Activated CD4-positive, alpha-beta T cell treated with anti-CD3 and anti-CD28 coated beads, Interleukin-2, amount 10 ng/mL, durations not matched to agents 24 days and 14 days (primary cell): ENCODE measurements at regions of chr1 and their contacts with region 1.

Region 1: DNA sequence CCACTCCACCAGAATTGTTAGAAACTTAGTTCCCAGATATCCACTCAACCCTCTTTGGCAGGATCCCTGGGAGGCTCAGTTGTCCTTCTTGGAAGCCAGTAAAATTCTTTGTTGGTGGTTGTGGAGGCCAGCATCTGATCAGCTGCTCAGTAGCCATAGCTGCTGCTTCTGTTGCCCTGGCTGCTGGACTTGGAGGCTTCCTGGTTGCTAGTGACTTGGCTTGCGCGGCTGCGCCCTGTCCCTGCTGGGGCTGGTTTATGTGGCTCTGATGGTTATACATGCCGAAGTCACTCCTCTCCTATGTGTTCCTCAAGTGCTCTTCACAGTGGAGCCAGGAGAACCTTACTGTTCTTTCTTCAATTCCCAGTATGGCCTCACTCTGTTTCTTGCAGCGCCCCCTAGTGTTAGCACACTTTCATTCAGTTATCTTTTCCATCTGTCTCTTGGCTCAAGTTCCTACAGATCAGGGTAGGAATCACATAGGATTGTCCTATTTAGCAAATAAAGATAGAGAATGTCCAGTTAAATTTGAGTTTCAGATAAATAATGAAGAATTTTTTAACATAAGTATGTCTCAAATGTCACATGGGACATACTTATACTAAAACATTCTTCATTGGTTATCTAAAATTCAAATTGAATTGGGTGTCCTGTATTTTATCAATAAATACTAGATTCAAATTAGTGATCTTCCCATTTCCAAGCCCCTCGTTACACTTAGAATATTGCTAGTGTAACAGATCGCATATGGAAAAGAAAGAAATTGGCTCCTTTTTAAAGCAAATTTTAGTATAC is 176.4 kb downstream of the TGFB2 start:
- DNase-seq: peak; percentile 78
- H3K4me3 Mint-ChIP-seq: no peak overlapping the region
- H3K27ac Mint-ChIP-seq: no peak overlapping the region
- H3K4me1 Mint-ChIP-seq: no peaks in the 10 kb centered on the region
- H3K27me3 Mint-ChIP-seq: peaks cover 4% of the 10 kb centered on the region

Region 2: DNA sequence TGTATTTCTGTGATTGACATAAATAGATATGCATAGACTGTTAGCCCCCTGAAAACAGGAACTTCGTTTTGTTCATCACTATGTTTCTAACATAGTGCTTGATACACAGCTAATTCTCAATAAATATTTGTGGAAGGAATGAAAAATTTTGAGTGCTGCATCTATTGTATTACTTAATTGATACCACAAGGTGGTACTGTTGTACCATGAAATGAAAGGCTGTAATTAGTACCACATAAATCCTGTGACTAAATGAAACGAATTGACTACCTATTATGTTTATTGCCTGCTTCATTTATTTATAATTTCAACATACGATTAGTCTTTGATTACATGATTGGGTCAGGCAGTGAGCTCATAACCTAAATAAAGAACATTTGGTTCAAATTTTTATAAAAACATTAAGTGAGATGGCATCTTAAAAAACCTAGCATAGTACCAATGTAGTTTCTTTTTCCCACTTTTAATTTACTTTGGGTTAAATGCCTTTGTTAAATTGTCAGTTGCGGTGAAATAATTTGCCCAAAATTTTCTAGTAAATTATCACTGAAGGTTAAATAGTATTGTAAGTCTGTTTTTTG is 191.4 kb before region 1 on chr1:
- intact Hi-C with region 1: loop called (anchors 1 kb)
- DNase-seq: no peak
- H3K4me3 Mint-ChIP-seq: no peak overlapping the region
- H3K27ac Mint-ChIP-seq: no peak overlapping the region
- H3K4me1 Mint-ChIP-seq: no peaks in the 10 kb centered on the region
- H3K27me3 Mint-ChIP-seq: no peaks in the 10 kb centered on the region

Region 3: DNA sequence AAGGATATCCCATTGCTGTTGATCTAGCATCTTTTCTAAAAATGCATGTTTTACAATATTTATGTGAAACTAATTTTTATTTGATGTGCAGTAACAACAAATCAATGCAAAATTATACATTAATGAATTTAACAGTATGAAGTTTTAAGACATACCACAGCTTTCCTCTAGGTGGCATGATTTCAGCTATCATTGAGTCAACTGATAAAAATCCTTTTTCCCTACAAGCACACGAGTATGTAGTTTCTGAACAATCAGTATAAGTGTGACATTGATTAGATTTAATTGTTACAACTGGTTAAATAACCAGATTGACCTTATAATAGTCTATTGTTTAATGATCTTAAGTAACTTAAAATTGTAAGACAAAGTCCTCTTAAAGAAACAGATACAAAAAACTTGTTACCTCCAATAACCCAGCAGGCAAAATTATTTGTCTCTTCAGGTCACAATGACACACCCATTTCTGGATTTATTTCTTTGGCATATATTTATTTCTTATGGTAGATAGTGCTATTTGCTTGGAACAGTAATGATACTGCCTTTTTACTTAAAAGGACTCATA is 182.2 kb before region 1 on chr1:
- intact Hi-C with region 1: loop called (anchors 1 kb)
- DNase-seq: no peak
- H3K4me3 Mint-ChIP-seq: no peak overlapping the region
- H3K27ac Mint-ChIP-seq: no peak overlapping the region
- H3K4me1 Mint-ChIP-seq: no peaks in the 10 kb centered on the region
- H3K27me3 Mint-ChIP-seq: peaks cover 12% of the 10 kb centered on the region

Region 4: DNA sequence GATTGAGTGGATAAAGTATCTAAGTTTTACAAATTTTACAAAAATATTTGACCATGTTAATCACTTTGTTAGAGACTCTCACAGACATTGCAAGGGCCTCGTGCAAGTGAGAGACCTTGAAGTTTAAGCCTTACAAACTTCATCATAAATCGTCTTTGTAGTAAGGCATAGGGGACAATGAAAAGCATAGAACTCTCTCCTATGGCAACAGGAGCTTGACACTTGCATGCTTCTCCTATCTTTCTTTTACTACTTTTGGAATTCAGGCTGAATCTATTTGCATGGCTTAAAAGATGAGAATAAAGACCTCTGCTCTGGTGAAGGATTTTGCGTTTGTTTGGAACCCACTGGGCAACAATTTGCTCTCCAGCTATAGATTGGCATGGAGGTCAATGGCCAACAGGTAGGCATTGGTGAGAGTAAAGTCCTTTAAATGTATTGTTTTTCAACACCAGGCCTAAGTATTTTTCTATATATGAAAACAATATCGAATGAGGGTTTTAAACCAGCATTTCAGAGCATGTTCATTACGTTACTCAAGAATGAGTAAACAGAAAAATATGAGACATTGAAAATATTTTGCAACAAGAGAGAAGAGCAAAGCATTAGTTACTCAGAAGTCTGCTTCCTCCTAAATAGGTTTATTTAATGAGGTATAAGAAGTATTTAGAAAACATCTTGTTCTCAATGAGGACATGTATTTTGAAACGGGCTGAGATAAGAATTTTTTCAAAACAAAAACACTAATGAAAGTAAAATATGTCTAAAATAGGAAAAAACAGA is 15.7 kb after region 1 on chr1:
- intact Hi-C with region 1: no loop called
- DNase-seq: no peak
- H3K4me3 Mint-ChIP-seq: no peak overlapping the region
- H3K27ac Mint-ChIP-seq: no peak overlapping the region
- H3K4me1 Mint-ChIP-seq: no peaks in the 10 kb centered on the region
- H3K27me3 Mint-ChIP-seq: no peaks in the 10 kb centered on the region